Head of caudate nucleus (tissue), 42 donors: ENCODE measurements at regions of chrX and their contacts with region 1.

Region 1: GRCh38 chrX:152632445-152633097 is 5.1 kb upstream of the GABRQ start:
- DNase-seq: peak in 40 of 42 donors; percentile 18 to 83 (median 66)

Region 2: GRCh38 chrX:151745651-151746050 is 886.9 kb before region 1 on chrX:
- intact Hi-C with region 1: loop called (anchors 5 kb)
- DNase-seq: peak in 2 of 42 donors; percentile 7 to 17